B cell (primary cell): ENCODE measurements at regions of chr20 and their contacts with region 1.

Region 1: GRCh38 chr20:61015602-61016001 is 236.5 kb upstream of the CDH4 start:
- DNase-seq: no peak
- ATAC-seq: no peak
- H3K4me3 ChIP-seq: no peak overlapping the region
- H3K4me3 Mint-ChIP-seq: no peak overlapping the region
- H3K27ac ChIP-seq: no peak overlapping the region
- H3K27ac Mint-ChIP-seq: no peak overlapping the region
- H3K4me1 ChIP-seq: no peaks in the 10 kb centered on the region
- H3K4me1 Mint-ChIP-seq: no peaks in the 10 kb centered on the region
- H3K27me3 ChIP-seq: no peaks in the 10 kb centered on the region
- H3K27me3 Mint-ChIP-seq: no peaks in the 10 kb centered on the region
- CTCF ChIP-seq: no peak

Region 2: DNA sequence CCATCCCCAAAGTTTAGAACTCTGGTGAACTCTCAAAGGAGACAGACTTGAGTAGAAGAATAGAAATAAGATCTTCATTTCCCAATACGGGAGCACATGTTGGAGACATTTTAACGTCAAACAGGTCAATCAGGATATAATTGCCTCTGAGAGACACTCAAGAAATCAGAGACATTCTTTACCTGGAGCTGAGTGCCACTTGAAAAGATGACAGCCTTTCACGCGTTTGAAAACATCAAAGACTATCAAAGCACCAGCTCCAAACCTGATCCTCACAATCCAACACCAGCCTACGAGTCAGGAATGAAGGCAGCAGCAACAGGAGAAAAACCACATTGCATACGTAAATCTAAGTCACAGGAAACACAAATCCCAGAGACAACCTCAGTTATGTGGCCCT is 335.0 kb before region 1 on chr20:
- CTCF ChIA-PET with region 1: no interaction called
- POLR2A ChIA-PET with region 1: no interaction called
- intact Hi-C with region 1: no loop called
- DNase-seq: no peak
- ATAC-seq: no peak
- H3K4me3 ChIP-seq: no peak overlapping the region
- H3K4me3 Mint-ChIP-seq: no peak overlapping the region
- H3K27ac ChIP-seq: no peak overlapping the region
- H3K27ac Mint-ChIP-seq: no peak overlapping the region
- H3K4me1 ChIP-seq: no peaks in the 10 kb centered on the region
- H3K4me1 Mint-ChIP-seq: no peaks in the 10 kb centered on the region
- H3K27me3 ChIP-seq: no peaks in the 10 kb centered on the region
- H3K27me3 Mint-ChIP-seq: no peaks in the 10 kb centered on the region
- CTCF ChIP-seq: no peak

Region 3: GRCh38 chr20:60993433-60994044 is 22.1 kb before region 1 on chr20:
- CTCF ChIA-PET with region 1: no interaction called
- POLR2A ChIA-PET with region 1: no interaction called
- intact Hi-C with region 1: loop called (anchors 1 kb)
- DNase-seq: no peak
- ATAC-seq: no peak
- H3K4me3 ChIP-seq: no peak overlapping the region
- H3K4me3 Mint-ChIP-seq: no peak overlapping the region
- H3K27ac ChIP-seq: no peak overlapping the region
- H3K27ac Mint-ChIP-seq: no peak overlapping the region
- H3K4me1 ChIP-seq: no peaks in the 10 kb centered on the region
- H3K4me1 Mint-ChIP-seq: no peaks in the 10 kb centered on the region
- H3K27me3 ChIP-seq: no peaks in the 10 kb centered on the region
- H3K27me3 Mint-ChIP-seq: no peaks in the 10 kb centered on the region
- CTCF ChIP-seq: no peak